ENCODE measurements at regions of chr5 and their contacts with region 1.

Region 1: DNA sequence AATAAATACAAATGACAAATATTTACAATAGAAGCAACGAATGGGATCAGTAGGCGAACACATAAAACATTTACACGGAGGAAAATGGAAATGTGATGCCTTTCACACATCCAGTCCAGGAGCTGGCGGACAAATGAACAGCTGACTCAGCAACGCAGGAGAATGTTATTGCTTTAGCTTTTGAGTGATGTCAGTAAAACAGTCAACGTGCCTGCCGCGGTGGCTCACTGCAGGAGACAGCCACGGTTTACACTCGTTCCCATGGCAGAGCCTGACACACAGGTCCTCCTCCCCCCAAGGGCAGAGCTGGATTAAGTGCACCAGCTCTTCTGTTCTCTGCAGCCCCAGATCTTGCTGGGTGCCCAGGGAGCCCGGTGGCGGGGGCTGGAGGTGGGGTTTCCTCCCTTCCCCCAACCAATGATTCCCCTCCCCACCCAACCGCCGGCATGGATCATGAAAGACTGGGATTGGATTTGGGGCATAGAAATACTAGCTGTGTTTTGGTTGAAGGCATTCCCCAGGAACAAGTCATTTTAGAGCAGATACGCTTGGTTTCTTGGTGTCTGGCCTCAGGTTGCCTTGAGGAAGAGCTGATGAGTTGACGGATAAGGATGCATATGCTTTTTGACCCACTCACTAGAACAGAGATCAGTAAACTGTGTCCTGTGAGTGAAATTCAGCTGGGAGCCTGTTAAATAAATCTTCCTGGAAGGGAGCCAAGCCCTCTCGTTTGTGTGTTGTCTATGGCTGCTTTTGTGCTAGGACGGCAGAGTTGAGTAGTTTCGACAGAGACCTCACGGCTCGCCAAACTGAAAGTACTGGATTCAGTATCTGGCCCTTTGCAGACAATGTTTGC is 12.5 kb downstream of the STC2 start:
- DNase-seq: no peak
- ATAC-seq: peak; percentile 50
- H3K4me3 Mint-ChIP-seq: no peak overlapping the region
- H3K27ac Mint-ChIP-seq: peak overlapping the region; percentile 91
- H3K4me1 Mint-ChIP-seq: peaks cover 42% of the 10 kb centered on the region
- H3K27me3 Mint-ChIP-seq: peaks cover 16% of the 10 kb centered on the region
- CTCF ChIP-seq: no peak

Region 2: DNA sequence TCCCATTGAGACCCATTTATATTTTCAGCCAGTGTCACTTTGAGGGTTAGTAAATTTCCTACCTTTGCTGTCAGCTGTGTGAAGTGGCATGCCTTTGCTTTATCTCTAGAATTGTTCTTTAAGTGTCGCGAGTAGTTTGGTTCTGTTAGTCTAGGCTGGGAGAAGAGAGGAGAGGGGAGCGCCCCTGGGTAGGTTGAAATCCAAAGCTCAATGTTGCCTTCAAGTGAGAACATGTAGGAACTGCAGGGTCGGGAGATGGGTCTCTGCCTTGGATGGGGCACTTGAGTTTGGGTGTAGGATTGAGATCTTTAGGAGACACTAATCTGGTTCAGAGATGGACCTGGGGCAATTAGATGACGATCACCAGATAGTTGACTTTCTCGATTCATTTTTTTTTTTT is 33.8 kb before region 1 on chr5:
- CTCF ChIA-PET with region 1: no interaction called
- POLR2A ChIA-PET with region 1: no interaction called
- DNase-seq: peak; percentile 50
- ATAC-seq: peak; percentile 84
- H3K4me3 Mint-ChIP-seq: no peak overlapping the region
- H3K27ac Mint-ChIP-seq: no peak overlapping the region
- H3K4me1 Mint-ChIP-seq: peaks cover 6% of the 10 kb centered on the region
- H3K27me3 Mint-ChIP-seq: peaks cover 61% of the 10 kb centered on the region
- CTCF ChIP-seq: no peak

Region 3: DNA sequence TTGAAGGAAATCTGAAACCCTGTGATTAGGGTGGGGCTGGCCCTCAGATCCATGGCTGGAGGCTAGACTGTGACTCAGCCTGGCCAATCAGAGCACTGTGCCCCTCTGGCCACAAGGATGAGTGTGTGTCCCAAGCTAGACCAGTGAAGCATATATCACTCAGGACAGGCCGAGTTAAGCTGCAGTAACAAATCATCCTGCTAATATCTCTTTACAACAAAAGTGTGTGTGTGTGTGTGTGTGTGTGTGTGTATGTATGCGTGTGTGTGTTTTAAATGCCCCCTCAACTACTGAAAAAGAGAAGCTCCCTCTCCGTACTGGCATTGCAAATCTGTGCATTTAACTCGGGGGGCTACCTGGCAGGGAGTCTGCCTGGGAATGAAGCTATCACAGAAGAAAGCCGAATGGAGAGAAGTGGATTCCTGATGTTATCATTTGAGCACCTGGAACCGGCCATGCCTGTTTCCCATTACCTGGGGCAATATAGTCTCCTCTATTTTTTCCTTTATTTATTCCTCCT is 13.1 kb before region 1 on chr5:
- CTCF ChIA-PET with region 1: interaction called, 10 read pairs
- POLR2A ChIA-PET with region 1: interaction called, 9 read pairs
- DNase-seq: no peak
- ATAC-seq: peak; percentile 74
- H3K4me3 Mint-ChIP-seq: no peak overlapping the region
- H3K27ac Mint-ChIP-seq: peak overlapping the region; percentile 93
- H3K4me1 Mint-ChIP-seq: peaks cover 51% of the 10 kb centered on the region
- H3K27me3 Mint-ChIP-seq: peaks cover 19% of the 10 kb centered on the region
- CTCF ChIP-seq: no peak